ENCODE measurements at regions of chr17 and their contacts with region 1.

Region 1: DNA sequence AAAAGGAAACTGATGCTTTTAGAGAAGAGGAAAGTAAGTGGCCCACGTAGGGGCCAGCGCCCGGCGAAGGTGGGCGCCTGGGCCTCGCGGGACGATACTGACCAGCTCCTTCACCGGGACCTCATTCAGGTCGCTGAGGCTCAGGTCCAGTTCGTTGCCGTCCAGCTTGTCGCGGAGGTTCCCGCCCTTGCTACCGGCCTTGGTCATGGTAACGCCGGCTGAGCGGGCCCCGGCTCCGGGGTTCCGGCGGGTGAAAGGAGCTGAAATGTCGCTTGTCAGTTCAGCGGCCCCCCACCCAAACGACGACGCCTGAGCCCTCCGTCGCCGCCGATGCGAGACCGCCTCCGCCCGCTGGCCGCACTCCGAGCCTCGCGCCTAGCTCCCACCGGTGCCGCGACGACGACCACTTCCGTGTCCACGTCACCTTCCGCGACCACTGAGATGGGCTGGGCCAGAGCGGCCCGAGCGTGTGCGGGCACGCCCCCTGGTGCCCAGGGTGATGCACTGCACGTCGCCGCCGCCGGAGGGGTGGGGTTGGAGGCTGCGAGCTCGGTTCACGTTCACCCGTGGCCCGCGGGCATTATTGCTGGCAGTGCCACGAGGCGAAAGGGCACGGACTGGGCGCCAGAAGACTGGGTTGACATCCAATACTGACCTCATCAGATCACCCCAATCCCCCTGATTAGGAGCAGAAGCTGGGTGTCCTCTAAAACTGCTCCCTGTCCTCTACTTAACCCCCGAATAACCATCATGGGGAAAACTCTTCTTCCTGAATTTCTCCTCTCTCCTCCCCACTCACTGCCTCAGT is at the start of gene LRRC59:
- DNase-seq: peak; percentile 90 to 95 (median 91)
- H3K4me3 ChIP-seq: peak within 1 kb of the TSS; percentile 95
- H3K4me3 Mint-ChIP-seq: peak within 1 kb of the TSS; percentile 84 to 95 (median 93)
- H3K27ac ChIP-seq: peak within 1 kb of the TSS; percentile 95
- H3K27ac Mint-ChIP-seq: peak within 1 kb of the TSS; percentile 72 to 96 (median 94)
- H3K4me1 ChIP-seq: peaks cover 29% of the 10 kb centered on the region
- H3K4me1 Mint-ChIP-seq: peaks cover 26 to 48% (median 43%) of the 10 kb centered on the region in 3 donors
- H3K27me3 ChIP-seq: no peaks in the 10 kb centered on the region
- H3K27me3 Mint-ChIP-seq: no peaks in the 10 kb centered on the region
- total RNA-seq, gene LRRC59: 122 to 127 TPM

Region 2: GRCh38 chr17:50345432-50346312 is 51.6 kb before region 1 on chr17 and contains the start of gene XYLT2:
- CTCF ChIA-PET with region 1: interaction called, 12 read pairs
- POLR2A ChIA-PET with region 1: interaction called, 3 read pairs
- DNase-seq: peak; percentile 88 to 94 (median 92)
- H3K4me3 ChIP-seq: peak within 1 kb of the TSS; percentile 82
- H3K4me3 Mint-ChIP-seq: peak within 1 kb of the TSS; percentile 87 to 97 (median 90)
- H3K27ac ChIP-seq: peak within 1 kb of the TSS; percentile 69
- H3K27ac Mint-ChIP-seq: peak within 1 kb of the TSS; percentile 84 to 95 (median 90)
- H3K4me1 ChIP-seq: peaks cover 22% of the 10 kb centered on the region
- H3K4me1 Mint-ChIP-seq: peaks cover 21 to 39% (median 30%) of the 10 kb centered on the region in 3 donors
- H3K27me3 ChIP-seq: no peaks in the 10 kb centered on the region
- H3K27me3 Mint-ChIP-seq: peaks cover 0 to 2% of the 10 kb centered on the region in 2 donors
- total RNA-seq, gene XYLT2: 31.8 to 32.6 TPM

Region 3: GRCh38 chr17:50372758-50373556 is 24.4 kb before region 1 on chr17 and contains the starts of genes EME1 and MRPL27:
- CTCF ChIA-PET with region 1: interaction called, 41 read pairs
- POLR2A ChIA-PET with region 1: interaction called, 7 read pairs
- DNase-seq: peak; percentile 76 to 91 (median 87)
- H3K4me3 ChIP-seq: peak within 1 kb of the TSS; percentile 100
- H3K4me3 Mint-ChIP-seq: peak within 1 kb of the TSS; percentile 90 to 99 (median 98)
- H3K27ac ChIP-seq: peak within 1 kb of the TSS; percentile 99
- H3K27ac Mint-ChIP-seq: peak within 1 kb of the TSS; percentile 91 to 100 (median 99)
- H3K4me1 ChIP-seq: peaks cover 24% of the 10 kb centered on the region
- H3K4me1 Mint-ChIP-seq: peaks cover 25 to 35% (median 26%) of the 10 kb centered on the region in 3 donors
- H3K27me3 ChIP-seq: no peaks in the 10 kb centered on the region
- H3K27me3 Mint-ChIP-seq: no peaks in the 10 kb centered on the region
- total RNA-seq, gene EME1: 23.6 to 24.8 TPM
- total RNA-seq, gene MRPL27: 87.2 to 88.8 TPM

Region 4: GRCh38 chr17:50386510-50386909 is 10.8 kb before region 1 on chr17:
- CTCF ChIA-PET with region 1: interaction called, 27 read pairs
- POLR2A ChIA-PET with region 1: interaction called, 5 read pairs
- DNase-seq: no peak
- H3K4me3 ChIP-seq: no peak overlapping the region
- H3K4me3 Mint-ChIP-seq: no peak overlapping the region
- H3K27ac ChIP-seq: no peak overlapping the region
- H3K27ac Mint-ChIP-seq: peak overlapping the region in 2 of 8 donors; percentile 52 to 61
- H3K4me1 ChIP-seq: no peaks in the 10 kb centered on the region
- H3K4me1 Mint-ChIP-seq: no peaks in the 10 kb centered on the region
- H3K27me3 ChIP-seq: no peaks in the 10 kb centered on the region
- H3K27me3 Mint-ChIP-seq: no peaks in the 10 kb centered on the region

Region 5: DNA sequence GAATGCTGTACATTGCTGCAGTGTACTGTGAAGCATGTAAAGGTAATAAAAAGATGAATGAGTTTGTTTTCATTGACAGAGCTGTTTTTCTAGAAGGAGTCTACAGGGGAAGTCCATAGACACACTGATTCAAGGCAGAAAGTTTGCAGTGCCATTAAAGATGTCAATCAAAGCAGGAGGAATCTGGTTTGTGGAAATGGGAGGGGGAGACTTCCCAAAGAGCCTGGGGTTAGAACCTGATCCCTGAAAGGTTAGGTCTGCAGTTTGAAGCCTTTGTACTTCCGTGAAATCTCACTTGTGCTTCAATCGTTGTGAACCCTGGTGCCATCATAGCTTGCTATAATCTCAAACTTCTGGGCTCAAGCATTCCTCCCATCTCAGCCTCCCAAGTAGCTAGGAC is 33.9 kb after region 1 on chr17:
- CTCF ChIA-PET with region 1: interaction called, 30 read pairs
- POLR2A ChIA-PET with region 1: interaction called, 7 read pairs
- DNase-seq: no peak
- H3K4me3 ChIP-seq: no peak overlapping the region
- H3K4me3 Mint-ChIP-seq: no peak overlapping the region
- H3K27ac ChIP-seq: no peak overlapping the region
- H3K27ac Mint-ChIP-seq: no peak overlapping the region
- H3K4me1 ChIP-seq: peaks cover 14% of the 10 kb centered on the region
- H3K4me1 Mint-ChIP-seq: peaks cover 16 to 27% (median 16%) of the 10 kb centered on the region in 3 donors
- H3K27me3 ChIP-seq: no peaks in the 10 kb centered on the region
- H3K27me3 Mint-ChIP-seq: no peaks in the 10 kb centered on the region

Region 6: DNA sequence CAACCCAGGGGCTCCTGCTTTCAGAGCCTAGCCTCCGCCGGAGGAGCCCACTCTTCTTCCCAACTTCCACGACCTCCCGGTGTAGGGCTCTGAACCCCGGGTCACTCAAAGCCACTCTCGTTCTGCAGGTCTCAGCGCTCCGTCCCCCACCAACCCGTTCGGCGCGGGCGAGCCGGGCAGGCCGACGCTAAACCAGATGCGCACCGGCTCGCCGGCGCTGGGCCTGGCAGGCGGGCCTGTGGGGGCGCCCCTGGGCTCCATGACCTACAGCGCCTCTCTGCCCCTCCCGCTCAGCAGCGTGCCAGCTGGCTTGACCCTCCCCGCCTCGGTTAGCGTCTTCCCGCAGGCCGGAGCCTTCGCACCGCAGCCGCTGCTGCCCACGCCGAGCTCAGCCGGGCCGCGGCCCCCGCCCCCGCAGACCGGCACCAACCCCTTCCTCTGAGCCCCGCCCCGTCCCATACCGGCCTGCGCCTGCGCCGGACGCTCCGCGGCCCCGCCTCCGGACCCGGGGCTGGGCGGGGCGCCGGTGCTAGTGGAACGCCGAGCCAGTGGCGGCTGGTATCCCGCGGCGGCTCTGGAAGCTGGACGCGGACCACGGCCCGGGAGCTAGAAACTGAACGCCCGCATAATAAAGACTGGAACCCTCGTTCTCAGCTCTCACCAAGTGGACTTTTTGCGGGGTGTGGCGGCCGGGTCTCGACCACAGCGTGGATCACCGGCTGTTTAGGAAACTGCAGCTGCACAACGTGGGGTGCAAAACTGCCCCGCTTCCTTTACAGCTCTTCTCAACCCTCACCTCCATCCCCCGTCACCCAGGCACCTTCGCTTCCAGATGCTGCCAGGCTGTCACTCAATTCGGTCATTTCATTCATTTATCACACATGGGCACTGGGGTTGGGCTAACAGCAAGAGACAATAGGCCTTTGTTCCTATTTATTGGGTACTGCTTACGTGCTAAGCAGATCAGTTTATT is 144.7 kb after region 1 on chr17:
- CTCF ChIA-PET with region 1: interaction called, 10 read pairs
- POLR2A ChIA-PET with region 1: no interaction called
- DNase-seq: peak; percentile 77 to 86 (median 81)
- H3K4me3 ChIP-seq: peak overlapping the region; percentile 39
- H3K4me3 Mint-ChIP-seq: peak overlapping the region; percentile 79 to 91 (median 82)
- H3K27ac ChIP-seq: peak overlapping the region; percentile 38
- H3K27ac Mint-ChIP-seq: peak overlapping the region; percentile 11 to 93 (median 62)
- H3K4me1 ChIP-seq: peaks cover 20% of the 10 kb centered on the region
- H3K4me1 Mint-ChIP-seq: peaks cover 13 to 25% (median 16%) of the 10 kb centered on the region in 3 donors
- H3K27me3 ChIP-seq: peaks cover 7% of the 10 kb centered on the region
- H3K27me3 Mint-ChIP-seq: peaks cover 0 to 1% of the 10 kb centered on the region in 2 donors